ENCODE measurements at regions of chr1 and their contacts with region 1.

Region 1: DNA sequence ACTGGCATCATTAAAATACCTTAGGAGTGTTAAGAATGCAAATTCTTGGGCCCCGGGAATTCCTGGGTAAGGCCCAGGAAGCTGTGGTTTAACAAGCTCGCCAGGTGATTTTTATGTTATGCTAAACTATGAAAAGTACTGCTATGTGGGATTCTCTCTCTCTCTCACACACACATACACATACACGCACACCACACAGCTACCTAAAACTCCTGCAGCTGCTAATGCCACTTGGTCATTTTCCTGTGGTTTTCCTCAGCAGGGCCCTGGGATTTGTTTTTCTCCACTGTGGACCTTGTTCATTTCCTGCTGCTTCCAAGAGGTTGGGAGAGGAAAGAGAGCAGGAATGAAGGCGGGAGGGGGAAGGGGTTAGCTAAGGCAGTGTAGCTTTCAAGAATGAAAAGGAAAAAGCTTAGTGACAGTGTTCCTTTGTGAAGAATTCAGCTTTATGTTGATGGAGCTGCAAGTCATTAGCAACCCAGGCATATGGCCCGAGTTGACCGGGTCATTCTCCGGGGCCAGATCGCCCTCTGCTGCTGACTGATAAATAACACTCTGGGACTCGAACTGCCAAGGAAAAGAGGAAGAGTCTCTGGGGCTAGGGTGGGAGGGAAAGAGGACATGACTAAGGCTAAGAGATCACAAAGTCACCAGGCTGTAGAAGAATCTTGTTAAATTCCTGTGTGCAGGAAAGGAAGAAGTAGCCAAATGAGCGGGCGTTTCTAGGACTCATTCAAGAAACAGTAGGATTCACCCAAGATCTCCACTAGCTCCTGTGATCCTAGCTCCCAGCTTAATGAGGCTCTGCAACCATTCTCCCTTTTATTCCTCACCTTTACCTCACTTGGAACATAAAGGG is 30.5 kb upstream of the LRIG2 start:
- DNase-seq: peak; percentile 20 to 75 (median 56)
- ATAC-seq: peak; percentile 60 to 98 (median 93)
- H3K4me3 ChIP-seq: no peak overlapping the region
- H3K27ac ChIP-seq: no peak overlapping the region
- H3K4me1 ChIP-seq: no peaks in the 10 kb centered on the region
- H3K27me3 ChIP-seq: no peaks in the 10 kb centered on the region
- CTCF ChIP-seq: peak in 3 of 4 donors; percentile 21 to 30 (median 27)

Region 2: GRCh38 chr1:112715264-112716053 is 327.1 kb before region 1 on chr1 and contains the start of gene PPM1J:
- intact Hi-C with region 1: loop called in 1 of 3 experiments (anchors 10 kb)
- DNase-seq: peak; percentile 99 to 100 (median 99)
- ATAC-seq: peak; percentile 85 to 92 (median 87)
- H3K4me3 ChIP-seq: peak within 1 kb of the TSS; percentile 26 to 83 (median 56)
- H3K27ac ChIP-seq: peak within 1 kb of the TSS in 3 of 4 donors; percentile 13 to 73 (median 58)
- H3K4me1 ChIP-seq: peaks cover 0 to 9% (median 5%) of the 10 kb centered on the region in 3 donors
- H3K27me3 ChIP-seq: no peaks in the 10 kb centered on the region
- CTCF ChIP-seq: no peak
- total RNA-seq, gene PPM1J: 0.20 to 1.6 (median 0.87) TPM

Region 3: GRCh38 chr1:112818990-112819689 is 223.4 kb before region 1 on chr1:
- intact Hi-C with region 1: no loop called
- DNase-seq: no peak
- ATAC-seq: peak in 2 of 4 donors; percentile 76 to 87
- H3K4me3 ChIP-seq: no peak overlapping the region
- H3K27ac ChIP-seq: peak overlapping the region in 1 of 4 donors; percentile 21
- H3K4me1 ChIP-seq: no peaks in the 10 kb centered on the region
- H3K27me3 ChIP-seq: no peaks in the 10 kb centered on the region
- CTCF ChIP-seq: no peak

Region 4: GRCh38 chr1:112882271-112882744 is 160.2 kb before region 1 on chr1:
- intact Hi-C with region 1: loop called (anchors 5 to 10 kb)
- DNase-seq: no peak
- ATAC-seq: peak in 3 of 4 donors; percentile 25 to 49 (median 28)
- H3K4me3 ChIP-seq: no peak overlapping the region
- H3K27ac ChIP-seq: peak overlapping the region in 1 of 4 donors; percentile 19
- H3K4me1 ChIP-seq: no peaks in the 10 kb centered on the region
- H3K27me3 ChIP-seq: no peaks in the 10 kb centered on the region
- CTCF ChIP-seq: no peak

Region 5: DNA sequence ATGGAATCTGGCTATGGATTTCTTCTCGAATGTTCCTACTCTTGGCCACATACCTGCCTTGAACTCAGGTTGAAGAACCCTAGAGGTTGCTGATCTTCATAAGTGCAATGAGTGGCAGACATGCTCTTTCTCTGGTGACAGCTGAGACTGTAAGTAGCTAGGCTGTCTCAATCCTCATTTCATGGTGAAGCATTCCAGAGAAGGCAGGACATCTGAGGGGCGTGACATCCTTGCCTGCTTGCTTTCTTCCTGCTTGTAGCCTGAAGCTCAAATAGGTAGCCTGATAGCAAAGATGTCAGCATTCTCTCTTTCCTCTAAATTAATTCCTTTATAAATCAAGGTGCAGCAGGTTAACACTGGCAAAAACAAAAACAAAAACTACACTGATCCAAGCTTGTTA is 233.2 kb after region 1 on chr1:
- intact Hi-C with region 1: no loop called
- DNase-seq: no peak
- ATAC-seq: no peak
- H3K4me3 ChIP-seq: no peak overlapping the region
- H3K27ac ChIP-seq: no peak overlapping the region
- H3K4me1 ChIP-seq: peaks cover 0 to 8% (median 5%) of the 10 kb centered on the region in 3 donors
- H3K27me3 ChIP-seq: no peaks in the 10 kb centered on the region
- CTCF ChIP-seq: no peak

Measured in pancreas (tissue), 10 donors.